Activated CD8-positive, alpha-beta T cell treated with anti-CD3 and anti-CD28 coated beads for 36 hours (primary cell): ENCODE measurements at regions of chr2 and their contacts with region 1.

Region 1: DNA sequence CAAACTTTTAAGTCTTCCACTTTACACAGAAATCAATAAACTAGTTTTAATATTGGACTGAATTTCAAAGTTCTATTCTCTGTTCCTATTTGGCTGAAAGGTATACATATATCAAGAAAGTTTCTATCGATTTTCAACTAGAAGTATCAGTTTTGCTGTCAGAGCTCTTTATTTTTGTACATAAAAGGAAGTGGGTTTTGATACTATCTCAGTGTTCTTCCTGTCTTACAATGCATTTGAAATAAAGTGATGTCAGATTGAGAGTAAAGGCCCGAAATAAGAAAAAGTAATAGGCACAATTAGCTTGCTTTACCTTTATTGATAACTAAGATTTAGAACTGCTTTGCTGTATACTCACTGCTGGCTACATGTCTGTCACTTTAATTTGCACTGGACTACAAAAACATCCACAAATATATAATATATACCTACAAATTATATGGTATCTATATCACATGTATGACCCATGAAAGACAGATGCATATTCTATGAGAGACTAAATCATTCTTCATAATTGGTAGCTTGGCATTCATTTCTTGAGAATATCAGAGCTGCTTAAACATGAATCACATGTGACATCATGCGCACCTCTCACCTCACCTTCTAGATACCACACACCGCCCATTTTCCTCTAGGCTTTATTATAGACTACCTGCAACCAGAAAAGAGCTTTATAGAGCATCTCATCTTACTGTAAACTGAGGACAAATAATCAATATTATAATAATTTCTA is 83.6 kb downstream of the ASXL2 start:
- DNase-seq: peak; percentile 52
- ATAC-seq: peak; percentile 57
- H3K4me3 Mint-ChIP-seq: peak overlapping the region; percentile 80
- H3K27ac Mint-ChIP-seq: peak overlapping the region; percentile 92
- H3K4me1 Mint-ChIP-seq: peaks cover 84% of the 10 kb centered on the region
- H3K27me3 Mint-ChIP-seq: no peaks in the 10 kb centered on the region
- CTCF ChIP-seq: no peak

Region 2: GRCh38 chr2:25817630-25818029 is 22.9 kb after region 1 on chr2:
- CTCF ChIA-PET with region 1: interaction called, 6 read pairs
- POLR2A ChIA-PET with region 1: interaction called, 12 read pairs
- intact Hi-C with region 1: no loop called
- DNase-seq: peak; percentile 52
- ATAC-seq: peak; percentile 90
- H3K4me3 Mint-ChIP-seq: peak overlapping the region; percentile 33
- H3K27ac Mint-ChIP-seq: peak overlapping the region; percentile 80
- H3K4me1 Mint-ChIP-seq: peaks cover 77% of the 10 kb centered on the region
- H3K27me3 Mint-ChIP-seq: no peaks in the 10 kb centered on the region
- CTCF ChIP-seq: no peak

Region 3: DNA sequence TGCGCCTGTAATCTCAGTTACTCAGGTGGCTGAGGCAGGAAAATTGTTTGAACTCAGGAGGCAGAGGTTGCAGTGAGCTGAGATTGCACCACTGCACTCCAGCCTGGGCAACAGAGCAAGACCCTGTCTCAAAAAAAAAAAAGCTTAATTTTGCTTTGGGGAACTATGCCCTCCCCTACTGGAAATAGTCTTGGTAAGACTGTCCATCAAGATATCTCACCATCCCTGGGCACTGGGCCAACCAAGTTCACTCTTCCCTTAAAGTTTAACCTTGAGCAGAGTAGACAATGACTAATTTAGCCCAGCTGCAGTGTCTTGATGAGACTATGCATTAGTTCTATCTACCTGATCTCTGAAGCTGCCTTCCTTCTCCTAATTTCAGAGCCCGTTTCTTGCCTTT is 38.9 kb after region 1 on chr2:
- CTCF ChIA-PET with region 1: interaction called, 3 read pairs
- POLR2A ChIA-PET with region 1: interaction called, 10 read pairs
- intact Hi-C with region 1: loop called (anchors 5 kb)
- DNase-seq: peak; percentile 56
- ATAC-seq: no peak
- H3K4me3 Mint-ChIP-seq: no peak overlapping the region
- H3K27ac Mint-ChIP-seq: peak overlapping the region; percentile 96
- H3K4me1 Mint-ChIP-seq: peaks cover 68% of the 10 kb centered on the region
- H3K27me3 Mint-ChIP-seq: no peaks in the 10 kb centered on the region
- CTCF ChIP-seq: no peak